ENCODE measurements at regions of chr10 and their contacts with region 1.

Region 1: DNA sequence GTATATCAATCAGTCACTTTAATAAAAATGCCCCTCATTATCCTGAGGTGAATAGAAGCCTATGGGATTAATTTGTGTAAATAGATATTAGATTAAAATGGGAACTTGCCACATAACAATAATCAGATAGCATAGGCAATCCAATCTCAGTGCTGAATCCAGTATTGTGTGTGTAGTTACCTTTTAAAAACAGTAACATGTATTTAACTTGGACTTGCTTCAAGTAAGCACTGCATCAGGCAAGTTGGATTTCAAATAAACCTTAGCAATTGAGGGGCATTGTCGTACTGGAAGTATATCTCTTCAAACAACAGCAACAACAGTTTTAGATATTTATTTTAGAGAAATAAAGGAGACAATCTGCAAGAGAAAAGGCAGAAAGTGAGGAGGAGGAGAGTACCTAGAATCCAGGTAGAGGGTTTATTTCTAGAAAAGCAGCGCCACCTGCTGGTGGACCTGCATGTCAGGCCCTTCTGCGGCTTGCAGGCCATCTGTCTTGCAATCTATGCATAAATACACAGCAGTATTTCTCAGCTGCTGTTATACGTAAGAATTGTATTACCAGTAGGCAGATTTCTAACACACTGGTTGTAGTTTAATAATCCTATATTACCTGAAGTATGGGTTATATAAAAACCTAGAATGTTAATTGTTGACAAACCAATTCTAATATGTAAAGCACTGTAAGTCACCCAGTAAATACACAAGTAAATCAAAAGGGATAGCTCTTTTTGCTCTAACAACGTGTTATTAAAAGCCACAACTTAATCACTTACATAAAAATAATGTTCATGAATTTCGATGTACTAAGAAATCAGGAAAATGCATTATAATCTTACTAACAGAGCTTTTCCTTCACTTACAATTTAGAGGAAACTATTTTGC is 652.8 kb downstream of the KCNMA1 start:
- DNase-seq: peak; percentile 20
- H3K4me3 Mint-ChIP-seq: no peak overlapping the region
- H3K27ac Mint-ChIP-seq: no peak overlapping the region
- H3K4me1 Mint-ChIP-seq: no peaks in the 10 kb centered on the region
- H3K27me3 Mint-ChIP-seq: peaks cover 2% of the 10 kb centered on the region

Region 2: DNA sequence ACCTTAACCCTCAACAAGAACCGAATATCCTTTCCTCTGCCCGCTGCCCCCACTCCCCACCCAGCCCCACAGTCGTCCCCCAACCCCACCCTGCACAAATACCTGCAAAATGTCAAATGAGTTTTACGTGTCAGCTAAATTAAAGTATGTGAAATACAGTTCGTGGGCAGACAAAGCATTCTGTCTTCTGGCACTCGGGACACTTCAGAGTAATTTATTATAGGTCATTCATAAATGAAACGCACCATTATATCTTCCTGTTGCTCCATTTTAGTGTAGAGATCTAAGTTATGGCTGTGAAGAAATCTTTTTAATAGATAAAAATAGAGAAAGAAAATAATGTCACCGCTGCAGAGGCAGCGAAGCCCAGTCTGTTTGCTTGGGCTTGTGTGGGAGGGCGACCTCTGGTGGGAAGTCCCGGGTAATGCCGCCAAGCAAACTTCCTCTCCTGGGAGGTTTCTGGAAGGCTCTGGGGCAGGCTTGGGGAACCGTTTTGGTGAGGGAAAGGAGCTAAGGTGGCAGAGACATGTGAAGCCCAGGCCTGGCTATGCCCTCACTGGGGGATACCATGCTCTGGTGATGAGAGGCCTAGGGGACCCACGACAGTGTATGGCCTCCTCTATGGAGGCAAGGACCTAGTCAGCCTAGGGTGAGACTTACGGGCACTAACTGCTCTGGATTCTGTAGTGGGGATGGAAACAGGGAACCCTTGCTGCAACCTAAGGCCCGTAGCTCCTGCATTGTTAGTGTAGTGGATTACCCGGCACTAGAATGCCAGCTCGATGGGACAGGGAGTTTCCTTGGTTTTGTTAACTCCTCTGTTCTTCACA is 948.5 kb before region 1 on chr10:
- intact Hi-C with region 1: loop called (anchors 10 kb)
- DNase-seq: peak; percentile 5
- H3K4me3 Mint-ChIP-seq: no peak overlapping the region
- H3K27ac Mint-ChIP-seq: no peak overlapping the region
- H3K4me1 Mint-ChIP-seq: no peaks in the 10 kb centered on the region
- H3K27me3 Mint-ChIP-seq: no peaks in the 10 kb centered on the region

Region 3: DNA sequence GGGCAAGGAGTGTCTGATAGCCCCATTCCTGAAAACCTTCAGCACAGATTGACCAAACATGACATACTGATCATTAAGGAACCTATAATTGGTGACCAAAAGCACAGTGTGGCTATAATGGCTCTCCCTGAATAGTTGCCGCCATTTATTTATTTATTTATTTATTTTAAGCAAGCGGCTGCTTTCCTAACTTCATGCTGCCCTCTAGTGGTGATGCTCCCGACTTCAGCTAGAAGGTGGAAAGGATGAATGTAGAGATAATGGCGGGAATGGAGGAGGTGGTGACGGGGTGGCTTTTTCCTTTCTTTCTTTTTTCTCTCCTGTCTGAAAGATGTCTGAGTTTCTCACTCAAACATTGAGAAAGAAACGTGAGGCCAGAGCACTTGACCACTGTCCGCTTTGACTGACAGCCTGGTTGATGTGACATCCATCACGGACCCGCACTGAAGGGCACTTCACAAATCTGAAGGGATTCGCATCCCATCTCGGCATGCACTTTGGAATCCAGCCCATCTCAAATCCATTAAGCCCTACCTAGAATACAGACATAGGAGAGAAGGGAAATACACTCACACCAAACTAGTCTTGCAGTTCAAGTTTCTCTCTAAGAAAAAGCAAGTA is 437.3 kb before region 1 on chr10:
- intact Hi-C with region 1: loop called (anchors 2 kb)
- DNase-seq: peak; percentile 9
- H3K4me3 Mint-ChIP-seq: no peak overlapping the region
- H3K27ac Mint-ChIP-seq: no peak overlapping the region
- H3K4me1 Mint-ChIP-seq: no peaks in the 10 kb centered on the region
- H3K27me3 Mint-ChIP-seq: no peaks in the 10 kb centered on the region

Measured in activated T-helper 1 cell treated with anti-CD3 and anti-CD28 coated beads, Interleukin-12 subunit alpha, Interleukin-12 subunit beta, Interleukin-2, Interleukin-4 antibody, amounts not matched to agents 30 ng/mL and 10 ng/mL and 1 ng/mL, durations not matched to agents 14 hours and 24 hours and 36 hours (primary cell).